ENCODE measurements at regions of chr11 and their contacts with region 1.

Region 1: DNA sequence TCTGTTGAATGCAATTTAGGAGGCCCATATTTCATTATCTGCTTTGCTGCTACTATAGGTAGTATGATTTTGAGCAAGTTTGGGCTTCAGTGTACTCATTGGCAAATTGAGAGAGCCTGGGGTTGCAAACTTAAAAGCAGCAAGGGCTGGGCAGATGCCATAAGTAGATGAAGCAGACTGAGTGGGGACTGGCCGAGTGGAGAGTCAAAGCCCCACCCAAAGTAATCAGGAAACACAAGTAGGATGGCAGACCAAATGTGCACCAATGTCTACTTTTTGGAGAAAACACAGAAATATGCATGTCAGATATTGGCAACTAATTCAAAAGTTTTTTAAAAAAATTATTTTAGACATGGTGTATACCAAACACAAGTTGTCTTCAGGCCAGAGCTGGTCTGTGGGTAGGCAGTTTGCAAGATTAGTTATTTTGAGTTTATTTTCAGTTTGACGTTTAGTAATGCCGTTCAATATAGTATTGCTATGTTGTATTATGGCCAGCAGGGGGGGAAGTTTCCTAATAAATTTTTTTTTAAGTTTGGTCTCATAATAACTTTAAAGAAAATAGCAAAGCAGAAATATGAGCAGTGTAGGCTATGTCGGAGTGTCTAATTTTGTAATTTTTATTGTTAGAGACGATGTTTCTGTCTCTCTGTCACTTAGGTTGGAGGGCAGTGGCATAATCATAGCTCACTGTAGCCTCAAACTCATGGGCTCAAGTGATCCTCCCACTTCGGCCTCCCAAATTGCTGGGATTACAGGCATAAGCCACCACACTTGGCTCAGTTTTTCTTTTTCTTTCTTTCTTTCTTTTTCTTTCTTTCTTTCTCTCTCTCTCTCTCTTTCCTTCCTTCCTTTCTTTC is 105.1 kb downstream of the HIPK3 start:
- DNase-seq: peak; percentile 25
- ATAC-seq: peak; percentile 64
- H3K4me3 Mint-ChIP-seq: no peak overlapping the region
- H3K27ac Mint-ChIP-seq: no peak overlapping the region
- H3K4me1 Mint-ChIP-seq: no peaks in the 10 kb centered on the region
- H3K27me3 Mint-ChIP-seq: peaks cover 11% of the 10 kb centered on the region
- CTCF ChIP-seq: peak; percentile 78

Region 2: DNA sequence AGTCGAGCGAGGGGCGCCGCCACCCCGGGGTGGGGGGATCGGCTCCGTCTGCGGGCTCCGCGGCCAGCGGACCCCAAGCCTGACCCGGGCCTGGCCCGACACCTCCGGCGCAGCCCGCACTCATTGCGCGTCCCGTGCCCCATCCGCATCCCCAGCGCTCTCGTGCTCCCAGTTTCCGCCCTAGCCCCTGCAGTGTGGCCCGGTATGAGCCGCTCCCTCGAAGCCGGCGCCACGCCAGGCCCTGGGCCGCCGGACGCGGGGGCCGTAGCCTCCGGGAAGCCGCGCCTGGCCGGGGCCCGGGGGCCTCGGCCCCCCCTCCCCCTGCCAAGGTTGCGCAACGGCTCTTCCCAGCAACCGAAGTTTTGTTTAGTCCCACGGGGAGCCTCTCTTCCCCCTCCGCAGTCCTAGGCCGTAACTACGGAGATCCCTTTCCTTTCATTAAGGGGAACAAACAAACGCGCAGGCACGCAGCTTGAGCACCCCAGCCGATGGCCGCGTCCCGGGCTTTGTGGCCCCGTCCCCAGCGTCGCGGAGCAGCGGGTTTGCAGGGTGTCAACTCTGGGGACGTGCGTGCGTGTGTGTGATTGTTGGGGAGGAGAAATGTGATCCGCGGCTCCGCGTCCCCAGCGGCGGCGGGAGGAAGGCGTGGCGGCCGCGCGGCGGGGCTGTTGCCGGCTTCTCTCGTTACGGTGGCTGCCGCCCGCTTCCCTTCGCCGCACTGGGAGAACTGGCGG is 104.2 kb before region 1 on chr11:
- CTCF ChIA-PET with region 1: no interaction called
- POLR2A ChIA-PET with region 1: no interaction called
- intact Hi-C with region 1: no loop called
- DNase-seq: peak; percentile 81
- ATAC-seq: peak; percentile 50
- H3K4me3 Mint-ChIP-seq: peak overlapping the region; percentile 97
- H3K27ac Mint-ChIP-seq: peak overlapping the region; percentile 99
- H3K4me1 Mint-ChIP-seq: peaks cover 40% of the 10 kb centered on the region
- H3K27me3 Mint-ChIP-seq: no peaks in the 10 kb centered on the region
- CTCF ChIP-seq: no peak

Region 3: GRCh38 chr11:33323421-33323820 is 38.9 kb before region 1 on chr11:
- CTCF ChIA-PET with region 1: no interaction called
- POLR2A ChIA-PET with region 1: no interaction called
- intact Hi-C with region 1: no loop called
- DNase-seq: no peak
- ATAC-seq: no peak
- H3K4me3 Mint-ChIP-seq: no peak overlapping the region
- H3K27ac Mint-ChIP-seq: no peak overlapping the region
- H3K4me1 Mint-ChIP-seq: peaks cover 26% of the 10 kb centered on the region
- H3K27me3 Mint-ChIP-seq: no peaks in the 10 kb centered on the region
- CTCF ChIP-seq: no peak

Region 4: GRCh38 chr11:33347490-33348125 is 14.7 kb before region 1 on chr11:
- CTCF ChIA-PET with region 1: interaction called, 13 read pairs
- POLR2A ChIA-PET with region 1: interaction called, 4 read pairs
- intact Hi-C with region 1: no loop called
- DNase-seq: peak; percentile 12
- ATAC-seq: no peak
- H3K4me3 Mint-ChIP-seq: no peak overlapping the region
- H3K27ac Mint-ChIP-seq: no peak overlapping the region
- H3K4me1 Mint-ChIP-seq: no peaks in the 10 kb centered on the region
- H3K27me3 Mint-ChIP-seq: no peaks in the 10 kb centered on the region
- CTCF ChIP-seq: no peak

Region 5: GRCh38 chr11:33389635-33390034 is 27.4 kb after region 1 on chr11:
- CTCF ChIA-PET with region 1: no interaction called
- POLR2A ChIA-PET with region 1: no interaction called
- intact Hi-C with region 1: no loop called
- DNase-seq: no peak
- ATAC-seq: no peak
- H3K4me3 Mint-ChIP-seq: no peak overlapping the region
- H3K27ac Mint-ChIP-seq: no peak overlapping the region
- H3K4me1 Mint-ChIP-seq: no peaks in the 10 kb centered on the region
- H3K27me3 Mint-ChIP-seq: peaks cover 8% of the 10 kb centered on the region
- CTCF ChIP-seq: no peak

Region 6: DNA sequence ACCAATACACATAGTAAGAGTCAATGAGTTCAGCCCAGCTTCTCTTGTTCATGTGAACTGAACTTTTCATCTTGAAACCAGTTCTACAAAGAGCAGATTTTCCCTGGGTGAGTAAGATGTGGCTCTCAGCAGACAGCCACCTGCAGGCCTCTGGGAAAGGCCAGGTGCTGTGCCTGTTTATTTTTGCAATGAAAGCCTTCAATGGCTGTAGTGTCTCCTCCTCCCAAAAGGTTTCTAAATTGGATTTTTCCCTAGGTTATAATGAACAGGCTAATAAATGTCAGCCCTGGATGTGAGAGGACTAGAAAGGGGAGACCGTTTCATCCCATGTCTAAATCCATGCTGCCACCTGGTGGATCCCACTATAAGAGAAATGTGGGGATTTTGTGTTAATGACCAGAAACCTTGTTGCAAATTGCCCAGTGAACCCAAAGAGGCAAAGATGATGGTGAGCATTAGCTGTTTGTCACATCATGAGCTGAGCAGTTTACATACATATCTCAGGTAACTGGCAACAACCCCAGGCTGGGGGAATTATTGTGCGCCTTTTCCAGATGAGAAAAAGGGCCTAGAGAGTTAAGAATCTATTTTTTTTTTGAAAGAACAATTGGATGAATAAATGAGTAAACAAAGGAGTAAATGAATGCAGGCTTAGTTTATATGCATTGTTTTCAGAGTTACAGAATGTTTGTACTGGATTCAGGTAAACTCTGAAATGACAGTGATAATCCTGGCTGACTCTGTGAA is 325.6 kb after region 1 on chr11:
- CTCF ChIA-PET with region 1: interaction called, 6 read pairs
- POLR2A ChIA-PET with region 1: no interaction called
- intact Hi-C with region 1: loop called (anchors 5 kb)
- DNase-seq: peak; percentile 48
- ATAC-seq: no peak
- H3K4me3 Mint-ChIP-seq: no peak overlapping the region
- H3K27ac Mint-ChIP-seq: no peak overlapping the region
- H3K4me1 Mint-ChIP-seq: no peaks in the 10 kb centered on the region
- H3K27me3 Mint-ChIP-seq: peaks cover 13% of the 10 kb centered on the region
- CTCF ChIP-seq: peak; percentile 49

Measured in activated CD8-positive, alpha-beta T cell treated with anti-CD3 and anti-CD28 coated beads for 36 hours (primary cell).